ENCODE measurements at regions of chr6 and their contacts with region 1.

Region 1: GRCh38 chr6:31541658-31542521 is at the start of gene DDX39B:
- DNase-seq: peak; percentile 89
- ATAC-seq: peak; percentile 80
- H3K4me3 Mint-ChIP-seq: peak within 1 kb of the TSS; percentile 95
- H3K27ac Mint-ChIP-seq: peak within 1 kb of the TSS; percentile 91
- H3K4me1 Mint-ChIP-seq: peaks cover 37% of the 10 kb centered on the region
- H3K27me3 Mint-ChIP-seq: no peaks in the 10 kb centered on the region
- total RNA-seq, gene DDX39B: 531 to 555 TPM

Region 2: DNA sequence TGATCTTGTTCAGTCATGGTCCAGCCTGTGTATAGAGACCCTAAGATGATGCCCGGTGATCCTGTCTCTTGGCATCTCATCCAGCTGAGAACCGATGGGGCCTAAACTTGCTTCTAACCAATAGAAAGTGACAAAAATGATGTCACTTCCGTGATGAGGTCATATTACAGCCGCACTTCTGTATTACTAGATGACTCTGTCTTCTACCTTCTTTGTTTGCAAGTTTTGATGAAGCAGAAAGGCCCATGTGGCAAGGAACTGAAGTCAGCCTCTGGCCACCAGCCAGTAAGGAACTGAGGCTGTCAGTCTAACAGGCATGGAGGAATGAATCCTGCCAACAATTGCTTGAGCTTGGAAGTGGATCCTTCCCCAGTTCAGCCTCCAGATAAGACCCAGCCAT is 237.2 kb before region 1 on chr6:
- POLR2A ChIA-PET with region 1: no interaction called
- DNase-seq: no peak
- ATAC-seq: no peak
- H3K4me3 Mint-ChIP-seq: no peak overlapping the region
- H3K27ac Mint-ChIP-seq: no peak overlapping the region
- H3K4me1 Mint-ChIP-seq: no peaks in the 10 kb centered on the region
- H3K27me3 Mint-ChIP-seq: peaks cover 32% of the 10 kb centered on the region

Region 3: DNA sequence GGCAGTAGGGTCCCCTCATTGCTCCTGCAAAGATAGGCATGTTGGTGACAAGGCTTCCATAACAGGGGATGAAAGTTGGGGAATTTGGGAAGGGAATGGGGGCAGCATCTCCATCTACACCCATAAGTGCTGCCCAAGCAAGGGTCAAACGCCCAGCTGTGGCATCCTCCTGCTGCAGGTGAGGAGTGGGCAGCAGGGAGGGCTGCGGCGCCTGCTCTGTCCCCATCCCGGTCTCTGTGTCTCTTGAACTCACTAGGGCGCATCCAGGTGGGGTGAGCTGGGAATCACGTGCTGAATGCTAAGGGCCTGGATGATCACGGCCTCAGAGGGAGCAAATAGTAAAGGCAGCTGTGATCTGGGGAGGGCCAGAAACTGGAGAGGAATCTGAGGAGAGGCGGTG is 129.4 kb before region 1 on chr6:
- POLR2A ChIA-PET with region 1: no interaction called
- DNase-seq: no peak
- ATAC-seq: no peak
- H3K4me3 Mint-ChIP-seq: no peak overlapping the region
- H3K27ac Mint-ChIP-seq: no peak overlapping the region
- H3K4me1 Mint-ChIP-seq: peaks cover 21% of the 10 kb centered on the region
- H3K27me3 Mint-ChIP-seq: no peaks in the 10 kb centered on the region

Region 4: DNA sequence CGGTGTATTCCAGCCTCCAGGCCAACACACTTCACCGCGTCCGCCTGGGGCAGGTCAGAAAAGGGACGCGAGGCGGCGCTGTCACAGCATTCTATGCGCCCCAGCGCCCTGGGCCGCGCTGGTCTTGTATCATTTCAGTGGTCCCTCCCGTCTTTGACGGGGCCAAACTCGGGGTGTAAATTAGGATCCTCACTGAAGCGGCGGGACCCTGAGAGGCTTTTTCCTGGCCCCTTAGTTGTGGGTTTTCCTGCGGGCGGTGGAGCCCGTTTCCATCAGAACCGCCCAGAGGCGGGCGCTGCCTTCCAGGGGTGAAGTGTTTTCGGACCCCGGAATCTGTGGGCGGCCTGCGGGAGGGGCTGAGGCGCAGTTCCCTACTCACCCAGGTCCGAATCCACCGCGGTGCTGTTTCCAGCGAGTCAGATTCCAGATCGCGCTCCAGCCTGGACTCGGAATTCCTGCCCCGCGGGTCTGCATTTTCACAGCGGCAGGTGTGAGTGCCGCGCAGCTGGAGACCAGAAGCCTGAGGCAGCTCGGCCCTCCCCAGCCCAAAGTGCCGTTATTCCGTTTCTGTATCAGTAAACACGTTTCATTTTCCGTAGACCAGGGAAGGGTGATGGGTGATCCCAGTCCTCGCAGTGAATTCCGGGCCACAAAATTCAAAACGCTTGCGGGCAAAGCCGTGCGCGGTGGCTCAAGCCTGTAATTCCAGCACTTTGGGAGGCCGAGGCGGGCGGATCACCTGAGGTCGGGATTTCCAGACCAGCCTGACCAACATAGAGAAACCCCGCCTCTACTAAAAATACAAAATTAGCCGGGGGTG is 47.8 kb before region 1 on chr6:
- POLR2A ChIA-PET with region 1: interaction called, 55 read pairs
- DNase-seq: peak; percentile 84
- ATAC-seq: peak; percentile 44
- H3K4me3 Mint-ChIP-seq: peak overlapping the region; percentile 97
- H3K27ac Mint-ChIP-seq: peak overlapping the region; percentile 96
- H3K4me1 Mint-ChIP-seq: peaks cover 38% of the 10 kb centered on the region
- H3K27me3 Mint-ChIP-seq: no peaks in the 10 kb centered on the region

Region 5: DNA sequence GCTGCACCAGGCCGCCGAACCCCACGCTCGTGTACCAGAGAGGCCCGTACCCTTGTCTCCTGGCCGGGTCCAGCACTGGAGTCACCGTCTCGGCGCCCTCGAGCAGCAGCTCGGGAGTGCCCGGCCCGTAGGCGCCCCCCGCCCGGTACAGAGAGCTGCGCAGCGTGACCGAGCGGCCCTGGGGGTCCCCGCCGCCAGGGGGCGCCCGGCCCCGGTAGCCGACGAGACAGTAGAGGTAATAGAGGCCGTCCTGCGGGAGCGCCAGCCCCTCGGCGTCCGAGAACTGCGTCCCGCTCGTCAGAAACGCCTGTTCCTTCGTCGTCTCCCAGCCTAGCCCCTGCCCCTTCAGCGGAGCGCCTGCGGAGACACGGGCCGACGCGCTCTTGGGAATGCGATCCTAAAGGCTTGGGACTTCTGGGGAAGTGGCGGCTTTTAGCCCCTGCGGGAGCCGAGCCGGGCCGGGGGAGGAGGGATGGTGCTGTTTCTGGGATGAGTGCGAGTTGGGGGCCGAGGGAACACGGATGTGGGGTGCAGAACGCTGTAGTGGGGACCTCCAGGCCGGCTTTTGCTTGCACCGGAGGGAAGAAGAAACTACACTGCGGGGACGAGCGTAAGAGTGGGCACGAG is 39.0 kb after region 1 on chr6:
- POLR2A ChIA-PET with region 1: interaction called, 24 read pairs
- DNase-seq: peak; percentile 97
- ATAC-seq: peak; percentile 74
- H3K4me3 Mint-ChIP-seq: peak overlapping the region; percentile 97
- H3K27ac Mint-ChIP-seq: peak overlapping the region; percentile 99
- H3K4me1 Mint-ChIP-seq: peaks cover 67% of the 10 kb centered on the region
- H3K27me3 Mint-ChIP-seq: no peaks in the 10 kb centered on the region

Region 6: DNA sequence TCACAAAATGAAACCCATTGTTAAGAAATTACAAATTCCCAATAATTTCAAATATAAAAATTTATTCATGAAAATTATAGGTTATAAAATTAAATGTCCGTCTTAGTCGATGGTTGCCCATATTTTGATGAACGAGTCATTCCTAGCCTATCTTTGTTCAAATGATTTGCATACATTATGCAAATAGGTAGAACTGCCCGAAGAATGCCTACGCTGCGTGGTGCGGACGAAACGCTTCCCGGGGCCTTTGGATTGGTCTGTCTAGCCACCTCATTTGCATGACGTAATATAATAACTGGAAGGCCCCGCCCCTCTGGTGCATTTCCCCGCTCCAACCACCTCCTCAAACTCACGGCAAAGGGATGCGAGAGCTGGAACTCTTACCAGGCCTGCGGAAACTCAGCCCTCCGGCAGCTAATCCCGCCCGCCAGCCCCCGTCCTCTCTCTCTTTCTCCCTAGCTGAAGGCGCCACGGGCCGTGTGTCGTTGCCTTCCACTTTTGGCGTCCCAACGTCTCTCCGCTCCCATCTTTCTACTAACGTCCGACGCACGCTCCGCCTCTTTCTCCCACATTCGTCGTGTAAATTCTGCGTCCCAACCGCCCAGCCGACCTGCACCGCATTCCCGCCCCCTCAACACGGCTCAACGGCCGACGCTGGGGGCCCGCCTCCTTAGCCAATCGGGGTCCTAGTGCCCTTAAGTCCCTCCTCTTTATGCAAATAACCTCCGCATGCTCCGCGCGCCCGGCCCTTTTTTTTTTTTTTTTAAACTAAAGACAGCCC is 78.1 kb after region 1 on chr6:
- POLR2A ChIA-PET with region 1: interaction called, 11 read pairs
- DNase-seq: peak; percentile 94
- ATAC-seq: peak; percentile 88
- H3K4me3 Mint-ChIP-seq: peak overlapping the region; percentile 91
- H3K27ac Mint-ChIP-seq: peak overlapping the region; percentile 96
- H3K4me1 Mint-ChIP-seq: peaks cover 40% of the 10 kb centered on the region
- H3K27me3 Mint-ChIP-seq: no peaks in the 10 kb centered on the region

Region 7: GRCh38 chr6:31665501-31666336 is 123.8 kb after region 1 on chr6 and contains the start of gene CSNK2B:
- POLR2A ChIA-PET with region 1: interaction called, 18 read pairs
- DNase-seq: peak; percentile 95
- ATAC-seq: peak; percentile 86
- H3K4me3 Mint-ChIP-seq: peak within 1 kb of the TSS; percentile 96
- H3K27ac Mint-ChIP-seq: peak within 1 kb of the TSS; percentile 98
- H3K4me1 Mint-ChIP-seq: peaks cover 42% of the 10 kb centered on the region
- H3K27me3 Mint-ChIP-seq: no peaks in the 10 kb centered on the region
- total RNA-seq, gene CSNK2B: 206 to 216 TPM

Measured in activated naive CD8-positive, alpha-beta T cell treated with anti-CD3 and anti-CD28 coated beads, Interleukin-2, amount 10 ng/mL, durations not matched to agents 7 days and 5 days (primary cell).